ENCODE measurements at regions of chr4 and their contacts with region 1.

Region 1: DNA sequence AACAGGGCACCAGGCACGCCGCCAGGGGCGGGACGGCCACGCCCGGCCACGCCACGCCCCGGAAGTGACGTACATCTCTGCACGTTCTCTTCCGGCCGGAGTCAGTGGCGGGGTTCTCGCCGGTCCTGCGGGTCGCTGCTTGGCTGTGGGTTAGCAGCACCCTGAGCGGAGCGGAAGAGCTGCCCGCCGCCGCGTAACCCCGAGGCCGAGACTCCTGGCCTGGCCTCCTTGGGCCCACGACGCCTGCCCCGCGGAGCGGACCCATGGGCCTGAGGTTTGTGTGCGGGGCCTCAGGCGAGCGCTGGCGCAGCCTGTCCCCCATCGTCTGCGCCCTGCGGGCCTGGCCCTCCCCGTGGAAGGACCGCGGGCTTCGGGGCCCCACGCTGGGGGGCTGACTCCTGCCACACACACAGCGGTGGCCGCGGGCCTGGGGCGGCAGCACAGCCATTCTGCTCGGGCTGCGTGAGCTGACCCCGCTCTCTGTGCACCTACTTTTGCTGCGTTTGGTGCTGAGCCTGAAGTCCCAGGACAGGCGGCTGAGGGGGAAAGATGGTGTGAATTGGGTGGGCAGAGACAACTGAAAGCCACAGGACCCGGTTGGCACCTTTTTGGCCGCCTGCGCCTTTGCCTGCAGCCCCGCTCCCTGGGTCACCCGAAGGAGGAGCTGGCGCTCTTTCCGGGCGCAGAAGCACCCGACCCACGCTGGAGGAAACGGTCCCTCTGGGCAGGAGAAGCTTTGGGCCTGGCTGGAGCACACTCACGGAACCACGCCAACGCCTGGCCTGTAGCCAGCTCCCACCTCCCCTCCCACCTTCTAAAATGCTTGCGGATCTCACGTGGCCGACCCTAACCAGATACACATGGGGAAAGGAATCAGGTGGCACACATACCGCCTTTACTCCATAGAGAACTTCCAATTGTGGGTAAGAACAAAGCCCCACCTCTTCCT is 28.1 kb downstream of the NOP14 start:
- DNase-seq: peak; percentile 98
- H3K4me3 ChIP-seq: peak overlapping the region; percentile 82 to 97 (median 90)
- H3K27ac ChIP-seq: peak overlapping the region; percentile 80 to 96 (median 94)
- H3K4me1 ChIP-seq: peaks cover 55 to 64% (median 64%) of the 10 kb centered on the region in 4 donors
- H3K27me3 ChIP-seq: no peaks in the 10 kb centered on the region
- CTCF ChIP-seq: peak in 1 of 3 experiments; percentile 7
- EP300 ChIP-seq: no peak
- POLR2A ChIP-seq: peak; percentile 91

Region 2: GRCh38 chr4:2843263-2843940 is 91.7 kb before region 1 on chr4 and contains the start of gene ADD1:
- intact Hi-C with region 1: loop called (anchors 2 kb)
- DNase-seq: peak; percentile 99
- H3K4me3 ChIP-seq: peak within 1 kb of the TSS; percentile 67 to 93 (median 84)
- H3K27ac ChIP-seq: peak within 1 kb of the TSS; percentile 81 to 98 (median 94)
- H3K4me1 ChIP-seq: peaks cover 28 to 50% (median 47%) of the 10 kb centered on the region in 4 donors
- H3K27me3 ChIP-seq: no peaks in the 10 kb centered on the region
- CTCF ChIP-seq: peak in 1 of 3 experiments; percentile 15
- EP300 ChIP-seq: peak; percentile 11
- POLR2A ChIP-seq: peak; percentile 79
- total RNA-seq, gene ADD1: 253 to 402 (median 311) TPM

Measured in esophagus muscularis mucosa (tissue), 4 donors.